ENCODE measurements at regions of chr11 and their contacts with region 1.

Region 1: DNA sequence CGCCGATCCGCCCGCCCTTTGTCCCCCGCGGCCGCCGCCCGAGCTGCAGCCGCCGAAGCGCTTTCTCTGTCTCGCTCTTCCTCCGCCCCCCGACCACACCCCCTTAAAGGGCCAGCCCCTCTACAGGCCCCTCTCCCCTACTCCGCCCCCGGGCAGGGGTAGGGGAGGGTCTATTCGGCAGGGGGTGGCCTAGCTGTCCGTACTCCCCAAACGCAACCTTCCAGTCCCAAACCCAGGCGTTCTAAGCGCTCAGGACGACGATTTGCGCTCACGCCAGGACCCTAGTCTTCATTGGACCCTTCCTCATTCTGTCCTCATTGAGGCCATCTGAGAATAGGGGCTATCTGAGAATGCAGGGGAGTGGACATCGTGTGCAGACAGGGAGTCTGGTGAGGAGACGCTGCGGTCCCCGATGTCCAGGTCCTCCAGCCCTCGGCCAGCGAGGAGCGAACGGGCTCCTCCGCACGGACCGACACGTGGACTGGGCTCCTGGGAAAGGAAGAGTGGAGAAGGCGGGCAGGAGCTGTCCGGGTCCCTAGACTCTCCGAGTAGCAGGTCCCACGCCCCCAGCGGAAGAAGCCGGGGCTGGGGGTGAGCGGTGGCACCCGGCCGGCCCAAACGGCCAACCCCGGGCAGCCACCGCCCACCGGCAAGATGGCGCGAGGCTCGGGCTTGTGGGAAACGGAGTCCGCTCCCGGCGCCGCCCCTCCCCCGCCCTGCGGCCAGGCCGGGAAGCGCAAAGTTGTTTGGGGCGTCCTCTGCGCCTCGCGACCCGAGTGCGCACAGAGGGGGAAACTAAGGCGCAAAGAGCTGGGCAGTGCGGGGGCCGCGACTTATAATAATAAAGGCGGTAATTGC is at the start of gene PPP1R14B:
- DNase-seq: peak; percentile 72 to 82 (median 74)
- H3K4me3 ChIP-seq: peak within 1 kb of the TSS; percentile 95 to 98
- H3K4me3 Mint-ChIP-seq: peak within 1 kb of the TSS; percentile 83 to 92 (median 88)
- H3K27ac ChIP-seq: peak within 1 kb of the TSS; percentile 63
- H3K27ac Mint-ChIP-seq: peak within 1 kb of the TSS; percentile 77 to 94 (median 92)
- H3K4me1 ChIP-seq: peaks cover 55% of the 10 kb centered on the region
- H3K4me1 Mint-ChIP-seq: peaks cover 10 to 70% (median 32%) of the 10 kb centered on the region in 4 donors
- H3K27me3 ChIP-seq: no peaks in the 10 kb centered on the region
- H3K27me3 Mint-ChIP-seq: no peaks in the 10 kb centered on the region
- total RNA-seq, gene PPP1R14B: 32.2 to 38.4 TPM

Region 2: DNA sequence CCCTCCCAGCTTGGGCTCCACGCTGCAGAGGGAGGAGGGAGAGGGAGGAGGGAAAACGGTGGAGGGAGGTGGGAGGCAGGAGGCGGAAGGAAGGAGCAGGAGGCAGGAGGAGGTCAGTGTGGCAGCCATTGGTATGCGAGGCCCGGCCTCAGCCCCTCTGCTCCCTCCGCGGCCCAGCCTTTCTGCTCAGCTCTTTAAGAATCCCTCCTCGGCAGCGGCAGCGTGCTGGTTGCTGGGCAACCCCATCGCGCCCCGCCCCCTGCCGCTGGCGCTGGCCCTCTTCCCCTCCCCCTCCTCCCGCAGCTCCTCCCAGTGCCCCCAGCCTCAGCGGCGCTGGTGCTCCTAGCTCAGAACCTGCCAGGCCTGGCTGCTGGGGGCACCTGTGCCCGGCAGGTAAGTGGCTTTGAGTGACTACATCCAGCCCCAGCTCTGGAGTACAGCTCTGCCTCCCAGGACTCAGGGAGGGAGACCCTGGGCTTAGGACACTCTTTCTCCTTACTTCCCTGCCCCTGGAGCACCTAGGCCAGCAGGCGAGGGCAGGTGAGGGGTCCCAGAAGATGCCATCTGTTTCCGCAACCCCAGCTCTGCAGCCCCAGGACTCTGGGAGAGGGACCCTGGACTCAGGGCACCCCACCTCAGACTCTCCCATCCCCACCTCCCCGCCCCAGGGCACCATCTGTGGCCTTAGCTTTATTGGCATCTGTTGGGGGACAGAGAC is 218.5 kb before region 1 on chr11:
- CTCF ChIA-PET with region 1: no interaction called
- POLR2A ChIA-PET with region 1: no interaction called
- intact Hi-C with region 1: no loop called
- DNase-seq: no peak
- H3K4me3 ChIP-seq: no peak overlapping the region
- H3K4me3 Mint-ChIP-seq: no peak overlapping the region
- H3K27ac ChIP-seq: no peak overlapping the region
- H3K27ac Mint-ChIP-seq: no peak overlapping the region
- H3K4me1 ChIP-seq: no peaks in the 10 kb centered on the region
- H3K4me1 Mint-ChIP-seq: no peaks in the 10 kb centered on the region
- H3K27me3 ChIP-seq: no peaks in the 10 kb centered on the region
- H3K27me3 Mint-ChIP-seq: peaks cover 11 to 28% of the 10 kb centered on the region in 2 donors

Region 3: DNA sequence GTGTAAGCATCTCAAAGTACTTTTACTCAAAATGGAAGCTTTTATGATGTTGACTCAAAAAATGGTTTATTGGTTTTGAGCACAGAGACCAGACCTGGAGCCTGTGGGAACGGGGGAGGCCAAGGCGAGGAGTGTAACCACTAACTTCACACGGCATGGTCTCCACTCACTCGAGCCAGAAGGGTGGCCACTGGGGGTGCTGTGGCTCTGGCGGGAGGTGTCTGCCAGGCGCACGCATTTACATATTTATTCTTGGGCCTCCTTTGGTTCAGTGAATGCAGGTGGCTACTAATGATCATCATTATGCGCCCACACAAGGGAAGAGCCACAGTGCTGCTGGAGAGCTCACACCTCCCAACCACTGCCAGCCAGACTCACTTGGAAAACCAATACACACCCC is 146.7 kb before region 1 on chr11:
- CTCF ChIA-PET with region 1: no interaction called
- POLR2A ChIA-PET with region 1: no interaction called
- intact Hi-C with region 1: no loop called
- DNase-seq: no peak
- H3K4me3 ChIP-seq: no peak overlapping the region
- H3K4me3 Mint-ChIP-seq: no peak overlapping the region
- H3K27ac ChIP-seq: no peak overlapping the region
- H3K27ac Mint-ChIP-seq: no peak overlapping the region
- H3K4me1 ChIP-seq: no peaks in the 10 kb centered on the region
- H3K4me1 Mint-ChIP-seq: no peaks in the 10 kb centered on the region
- H3K27me3 ChIP-seq: no peaks in the 10 kb centered on the region
- H3K27me3 Mint-ChIP-seq: peaks cover 0 to 4% of the 10 kb centered on the region in 2 donors

Region 4: DNA sequence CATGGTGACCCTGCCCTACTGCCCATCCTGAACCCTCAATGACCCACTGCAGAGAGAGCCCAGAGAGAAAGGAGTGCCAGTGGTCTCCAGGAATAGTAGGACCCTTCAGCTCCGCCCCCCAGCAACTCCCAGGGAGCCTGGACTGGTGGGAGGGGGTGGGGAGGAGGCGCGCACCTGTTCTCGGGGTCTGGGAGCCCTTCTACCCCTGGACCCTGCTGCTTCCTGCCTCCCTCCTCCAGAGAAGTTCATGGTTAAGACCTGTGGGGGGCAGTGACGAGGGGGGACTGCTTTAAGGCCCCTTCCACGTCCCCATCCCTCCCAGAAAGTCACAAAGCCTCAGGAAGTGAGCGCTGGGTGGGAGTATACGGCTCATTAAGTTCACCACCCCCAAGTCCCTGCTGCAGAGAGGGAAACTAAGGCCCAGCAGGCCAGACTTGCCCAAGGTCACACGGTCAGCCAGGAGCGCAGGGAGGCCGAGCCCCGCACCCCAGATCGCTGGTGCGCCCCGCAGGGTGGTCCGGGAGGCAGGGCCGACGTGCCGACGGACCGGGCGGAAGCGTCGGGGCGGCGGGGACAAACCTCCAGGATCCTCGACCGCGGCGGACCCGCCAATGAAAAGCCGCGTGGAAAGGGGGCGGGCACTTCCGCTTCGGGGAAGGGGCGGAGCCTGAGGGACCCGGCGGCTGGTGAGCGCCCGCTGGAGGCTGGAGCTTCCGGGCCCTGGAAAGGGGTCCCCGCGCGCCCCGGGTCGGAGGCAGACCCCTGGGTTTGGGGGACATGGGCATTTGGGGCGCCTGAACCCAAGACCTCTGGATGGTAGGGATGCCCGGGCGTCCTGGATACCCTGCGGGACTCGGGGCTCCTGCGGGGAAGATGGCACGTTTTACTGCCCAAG is 21.2 kb before region 1 on chr11 and contains the starts of genes NUDT22 and TRPT1:
- CTCF ChIA-PET with region 1: interaction called, 12 read pairs
- POLR2A ChIA-PET with region 1: interaction called, 200 read pairs
- intact Hi-C with region 1: loop called (anchors 1 kb)
- DNase-seq: peak; percentile 82 to 88 (median 85)
- H3K4me3 ChIP-seq: peak within 1 kb of the TSS; percentile 86 to 94
- H3K4me3 Mint-ChIP-seq: peak within 1 kb of the TSS; percentile 89 to 94 (median 92)
- H3K27ac ChIP-seq: peak within 1 kb of the TSS; percentile 77
- H3K27ac Mint-ChIP-seq: peak within 1 kb of the TSS; percentile 88 to 97 (median 93)
- H3K4me1 ChIP-seq: peaks cover 43% of the 10 kb centered on the region
- H3K4me1 Mint-ChIP-seq: peaks cover 13 to 50% (median 28%) of the 10 kb centered on the region in 4 donors
- H3K27me3 ChIP-seq: no peaks in the 10 kb centered on the region
- H3K27me3 Mint-ChIP-seq: no peaks in the 10 kb centered on the region
- total RNA-seq, gene NUDT22: 83.9 to 101 TPM
- total RNA-seq, gene TRPT1: 37.6 to 42.1 TPM

Region 5: GRCh38 chr11:64233913-64234834 is 12.9 kb before region 1 on chr11 and contains the start of gene VEGFB:
- CTCF ChIA-PET with region 1: interaction called, 7 read pairs
- POLR2A ChIA-PET with region 1: interaction called, 141 read pairs
- intact Hi-C with region 1: loop called (anchors 1 kb)
- DNase-seq: peak; percentile 62 to 76 (median 66)
- H3K4me3 ChIP-seq: peak within 1 kb of the TSS; percentile 57 to 58
- H3K4me3 Mint-ChIP-seq: peak within 1 kb of the TSS; percentile 79 to 87 (median 82)
- H3K27ac ChIP-seq: peak within 1 kb of the TSS; percentile 71
- H3K27ac Mint-ChIP-seq: peak within 1 kb of the TSS; percentile 73 to 94 (median 91)
- H3K4me1 ChIP-seq: peaks cover 40% of the 10 kb centered on the region
- H3K4me1 Mint-ChIP-seq: peaks cover 14 to 51% (median 34%) of the 10 kb centered on the region in 4 donors
- H3K27me3 ChIP-seq: no peaks in the 10 kb centered on the region
- H3K27me3 Mint-ChIP-seq: no peaks in the 10 kb centered on the region
- total RNA-seq, gene VEGFB: 96.8 to 97.3 TPM

Region 6: GRCh38 chr11:64263021-64263946 is 16.2 kb after region 1 on chr11:
- CTCF ChIA-PET with region 1: interaction called, 43 read pairs
- POLR2A ChIA-PET with region 1: interaction called, 289 read pairs
- intact Hi-C with region 1: no loop called
- DNase-seq: no peak
- H3K4me3 ChIP-seq: no peak overlapping the region
- H3K4me3 Mint-ChIP-seq: peak overlapping the region in 1 of 8 donors; percentile 45
- H3K27ac ChIP-seq: no peak overlapping the region
- H3K27ac Mint-ChIP-seq: peak overlapping the region in 1 of 7 donors; percentile 60
- H3K4me1 ChIP-seq: peaks cover 6% of the 10 kb centered on the region
- H3K4me1 Mint-ChIP-seq: peaks cover 2 to 14% (median 8%) of the 10 kb centered on the region in 4 donors
- H3K27me3 ChIP-seq: no peaks in the 10 kb centered on the region
- H3K27me3 Mint-ChIP-seq: no peaks in the 10 kb centered on the region

Region 7: GRCh38 chr11:64284048-64284961 is 37.2 kb after region 1 on chr11 and contains the start of gene BAD:
- CTCF ChIA-PET with region 1: interaction called, 4 read pairs
- POLR2A ChIA-PET with region 1: interaction called, 54 read pairs
- intact Hi-C with region 1: loop called (anchors 1 kb)
- DNase-seq: peak; percentile 89 to 94 (median 90)
- H3K4me3 ChIP-seq: peak within 1 kb of the TSS; percentile 93 to 96
- H3K4me3 Mint-ChIP-seq: peak within 1 kb of the TSS; percentile 90 to 93 (median 92)
- H3K27ac ChIP-seq: peak within 1 kb of the TSS; percentile 100
- H3K27ac Mint-ChIP-seq: peak within 1 kb of the TSS; percentile 96 to 99 (median 98)
- H3K4me1 ChIP-seq: peaks cover 24% of the 10 kb centered on the region
- H3K4me1 Mint-ChIP-seq: peaks cover 12 to 48% (median 23%) of the 10 kb centered on the region in 4 donors
- H3K27me3 ChIP-seq: no peaks in the 10 kb centered on the region
- H3K27me3 Mint-ChIP-seq: no peaks in the 10 kb centered on the region
- total RNA-seq, gene BAD: 23.1 to 26.2 TPM

Measured in CD4-positive, alpha-beta memory T cell (primary cell).